Dorsolateral prefrontal cortex (tissue), 120 donors: ENCODE measurements at regions of chr13 and their contacts with region 1.

Region 1: GRCh38 chr13:30132623-30133553 is 174.5 kb downstream of the KATNAL1 start:
- DNase-seq: peak; percentile 96 to 100 (median 98)
- H3K4me3 ChIP-seq: peak overlapping the region in 42 of 59 donors; percentile 3 to 51 (median 28)
- H3K27ac ChIP-seq: peak overlapping the region in 19 of 59 donors; percentile 1 to 81 (median 44)
- H3K27me3 ChIP-seq: no peaks in the 10 kb centered on the region
- CTCF ChIP-seq: peak; percentile 82 to 99 (median 97)

Region 2: GRCh38 chr13:29902101-29902952 is 230.6 kb before region 1 on chr13:
- intact Hi-C with region 1: no loop called
- DNase-seq: no peak
- H3K4me3 ChIP-seq: peak overlapping the region in 3 of 59 donors; percentile 2 to 10 (median 8)
- H3K27ac ChIP-seq: peak overlapping the region in 28 of 59 donors; percentile 0 to 72 (median 47)
- H3K27me3 ChIP-seq: no peaks in the 10 kb centered on the region
- CTCF ChIP-seq: no peak

Region 3: GRCh38 chr13:30078059-30078458 is 54.8 kb before region 1 on chr13:
- intact Hi-C with region 1: no loop called
- DNase-seq: no peak
- H3K4me3 ChIP-seq: no peak overlapping the region
- H3K27ac ChIP-seq: no peak overlapping the region
- H3K27me3 ChIP-seq: no peaks in the 10 kb centered on the region
- CTCF ChIP-seq: no peak

Region 4: DNA sequence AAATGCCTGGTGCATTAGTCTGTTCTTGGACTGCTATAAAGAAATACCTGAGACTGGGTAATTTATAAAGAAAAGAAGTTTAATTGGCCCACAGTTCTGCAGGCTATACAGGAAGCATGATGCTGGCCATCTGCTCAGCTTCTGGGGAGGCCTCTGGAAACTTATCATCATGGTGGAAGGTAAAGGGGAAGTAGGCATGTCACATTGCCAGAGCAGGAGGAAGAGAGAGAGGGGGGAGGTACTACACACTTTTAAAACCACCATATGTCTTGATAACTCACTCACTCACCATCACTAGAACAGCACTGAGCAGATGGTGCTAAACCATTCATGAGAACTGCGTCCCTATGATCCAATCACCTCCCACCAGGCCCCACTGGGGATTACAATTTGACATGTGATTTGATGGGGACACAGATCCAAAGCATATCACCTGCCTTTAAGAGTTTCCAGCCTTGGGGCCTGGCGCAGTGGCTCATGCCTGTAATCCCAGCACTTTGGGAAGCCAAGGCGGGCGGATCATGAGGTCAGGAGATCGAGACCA is 44.5 kb before region 1 on chr13:
- intact Hi-C with region 1: no loop called
- DNase-seq: no peak
- H3K4me3 ChIP-seq: no peak overlapping the region
- H3K27ac ChIP-seq: no peak overlapping the region
- H3K27me3 ChIP-seq: no peaks in the 10 kb centered on the region
- CTCF ChIP-seq: no peak

Region 5: GRCh38 chr13:30334663-30335386 is 201.9 kb after region 1 on chr13:
- intact Hi-C with region 1: loop called in 1 of 2 experiments (anchors 5 kb)
- DNase-seq: no peak
- H3K4me3 ChIP-seq: no peak overlapping the region
- H3K27ac ChIP-seq: peak overlapping the region in 1 of 59 donors; percentile 14
- H3K27me3 ChIP-seq: no peaks in the 10 kb centered on the region
- CTCF ChIP-seq: peak in 55 of 56 donors; percentile 39 to 79 (median 61)

Region 6: GRCh38 chr13:30364876-30365275 is 232.0 kb after region 1 on chr13:
- intact Hi-C with region 1: no loop called
- DNase-seq: no peak
- H3K4me3 ChIP-seq: no peak overlapping the region
- H3K27ac ChIP-seq: peak overlapping the region in 17 of 59 donors; percentile 1 to 78 (median 38)
- H3K27me3 ChIP-seq: no peaks in the 10 kb centered on the region
- CTCF ChIP-seq: no peak

Region 7: GRCh38 chr13:30572859-30573275 is 440.0 kb after region 1 on chr13:
- intact Hi-C with region 1: loop called in 1 of 2 experiments (anchors 10 kb)
- DNase-seq: no peak
- H3K4me3 ChIP-seq: peak overlapping the region in 58 of 59 donors; percentile 5 to 67 (median 49)
- H3K27ac ChIP-seq: peak overlapping the region in 31 of 59 donors; percentile 0 to 77 (median 32)
- H3K27me3 ChIP-seq: no peaks in the 10 kb centered on the region
- CTCF ChIP-seq: peak in 39 of 56 donors; percentile 15 to 70 (median 38)

Region 8: DNA sequence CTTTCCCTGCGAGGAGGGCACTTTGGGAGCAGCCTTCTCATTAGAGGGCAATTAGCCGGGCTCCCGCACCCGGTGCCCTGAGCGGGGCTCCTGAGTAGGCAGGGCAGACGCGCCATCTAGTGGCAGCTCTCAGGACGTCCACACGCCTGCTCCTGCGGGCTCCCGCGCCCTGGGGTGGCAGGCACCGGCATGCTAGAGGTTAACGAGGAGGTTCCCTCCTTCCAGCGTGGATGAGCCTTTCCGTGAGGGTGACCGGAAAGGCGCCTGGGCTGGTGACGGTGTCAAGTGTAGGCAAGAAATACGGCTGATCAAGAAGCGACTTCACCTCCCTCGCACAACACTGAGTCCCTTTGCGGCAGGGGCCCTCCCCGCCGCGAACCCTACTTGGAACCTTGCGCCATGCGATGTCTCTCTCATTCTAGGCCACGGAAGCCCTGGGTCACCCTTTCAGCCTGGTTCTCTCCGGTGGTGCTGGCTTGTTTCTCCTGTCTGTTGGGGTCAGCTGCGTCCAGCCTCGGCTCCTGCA is 670.1 kb after region 1 on chr13:
- intact Hi-C with region 1: loop called (anchors 5 to 10 kb)
- DNase-seq: peak; percentile 79 to 95 (median 90)
- H3K4me3 ChIP-seq: peak overlapping the region in 58 of 59 donors; percentile 20 to 71 (median 53)
- H3K27ac ChIP-seq: peak overlapping the region in 31 of 59 donors; percentile 5 to 78 (median 40)
- H3K27me3 ChIP-seq: no peaks in the 10 kb centered on the region
- CTCF ChIP-seq: peak; percentile 47 to 99 (median 96)

Region 9: DNA sequence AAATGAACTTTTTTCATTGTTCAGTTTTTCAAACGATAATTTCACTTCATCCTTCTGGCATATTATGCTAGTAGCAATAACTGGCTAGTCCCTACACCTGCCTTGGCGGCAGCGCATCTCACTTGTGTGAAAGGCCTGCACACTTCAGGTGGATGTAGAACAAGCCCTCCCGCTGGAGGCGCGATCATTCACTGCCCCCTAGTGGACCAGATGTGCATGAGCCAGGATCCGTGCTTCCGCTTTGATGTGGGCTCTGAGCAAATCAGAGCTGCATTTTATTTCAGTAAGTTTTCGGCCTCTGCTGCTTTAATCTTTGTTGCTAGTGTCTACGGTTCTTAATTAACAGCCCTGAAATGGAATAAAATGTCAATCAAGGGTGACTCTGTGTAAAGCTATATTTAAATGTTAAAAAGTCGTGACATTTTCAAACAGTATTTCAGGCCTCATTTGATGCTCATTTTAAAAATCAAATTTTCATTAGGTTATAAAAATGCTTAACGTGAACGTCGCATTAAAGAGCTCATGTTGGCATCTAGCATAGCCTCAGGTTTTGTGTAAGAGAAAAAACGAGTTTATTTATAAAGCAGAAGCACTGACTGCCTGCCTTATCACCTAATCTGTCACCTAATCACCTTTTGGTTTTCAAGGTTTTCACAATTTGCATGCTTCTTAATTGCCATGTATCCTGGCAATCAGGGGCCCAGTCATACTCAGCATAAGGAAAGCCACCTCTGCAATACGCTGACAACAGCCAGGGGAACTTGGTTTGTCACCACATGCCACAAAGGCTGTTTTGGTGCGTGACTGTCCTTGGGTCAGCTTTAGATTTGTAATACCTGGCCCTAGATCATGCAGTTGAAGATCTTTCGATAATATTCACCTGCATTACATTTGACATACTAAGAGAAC is 911.7 kb after region 1 on chr13:
- intact Hi-C with region 1: loop called in 1 of 2 experiments (anchors 5 kb)
- DNase-seq: peak; percentile 70 to 88 (median 84)
- H3K4me3 ChIP-seq: no peak overlapping the region
- H3K27ac ChIP-seq: peak overlapping the region in 3 of 59 donors; percentile 14 to 38 (median 24)
- H3K27me3 ChIP-seq: peaks cover 0 to 5% (median 0%) of the 10 kb centered on the region in 45 donors
- CTCF ChIP-seq: peak; percentile 90 to 98 (median 96)